Activated T-helper 1 cell treated with anti-CD3 and anti-CD28 coated beads, Interleukin-12 subunit alpha, Interleukin-12 subunit beta, Interleukin-2, Interleukin-4 antibody, amounts not matched to agents 30 ng/mL and 10 ng/mL and 1 ng/mL, durations not matched to agents 14 hours and 24 hours and 36 hours (primary cell): ENCODE measurements at regions of chr1 and their contacts with region 1.

Region 1: DNA sequence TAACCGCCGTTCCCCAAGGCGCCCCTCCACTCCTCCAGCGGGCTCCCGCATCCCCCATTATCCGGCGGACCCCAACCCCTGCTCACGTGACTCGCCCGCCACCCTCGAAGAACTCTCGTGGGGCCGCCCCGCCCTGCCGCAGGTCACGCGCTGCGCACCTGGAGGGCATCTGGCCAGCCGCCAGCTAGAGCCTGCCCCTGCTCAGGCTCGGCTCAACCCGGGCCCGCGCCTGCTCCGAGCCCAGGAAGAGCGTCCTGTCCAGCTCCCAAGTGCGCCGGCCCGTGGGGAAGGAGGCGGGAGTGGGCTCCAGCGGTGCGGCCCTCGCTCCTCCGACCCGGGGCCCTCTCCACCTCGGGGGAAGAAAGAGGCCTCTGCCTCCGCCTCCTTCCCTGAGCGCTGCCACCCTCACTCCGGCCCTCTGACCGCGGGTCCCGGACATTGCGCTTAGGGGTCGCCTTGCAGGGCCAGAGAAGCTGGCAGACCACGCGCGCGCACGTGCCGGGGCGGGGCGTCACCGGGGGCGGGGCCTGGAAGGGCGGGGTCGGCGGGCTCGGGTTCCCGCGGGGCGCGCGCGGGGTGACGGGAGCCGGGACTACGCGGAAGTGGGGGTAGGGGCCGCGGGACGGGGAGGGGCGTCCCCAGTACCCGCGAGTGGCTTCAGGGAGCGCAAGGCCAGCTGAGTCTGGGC is 28.4 kb downstream of the HMGN2 start:
- DNase-seq: peak; percentile 84
- H3K4me3 Mint-ChIP-seq: peak overlapping the region; percentile 90
- H3K27ac Mint-ChIP-seq: peak overlapping the region; percentile 91
- H3K4me1 Mint-ChIP-seq: peaks cover 18% of the 10 kb centered on the region
- H3K27me3 Mint-ChIP-seq: no peaks in the 10 kb centered on the region

Region 2: DNA sequence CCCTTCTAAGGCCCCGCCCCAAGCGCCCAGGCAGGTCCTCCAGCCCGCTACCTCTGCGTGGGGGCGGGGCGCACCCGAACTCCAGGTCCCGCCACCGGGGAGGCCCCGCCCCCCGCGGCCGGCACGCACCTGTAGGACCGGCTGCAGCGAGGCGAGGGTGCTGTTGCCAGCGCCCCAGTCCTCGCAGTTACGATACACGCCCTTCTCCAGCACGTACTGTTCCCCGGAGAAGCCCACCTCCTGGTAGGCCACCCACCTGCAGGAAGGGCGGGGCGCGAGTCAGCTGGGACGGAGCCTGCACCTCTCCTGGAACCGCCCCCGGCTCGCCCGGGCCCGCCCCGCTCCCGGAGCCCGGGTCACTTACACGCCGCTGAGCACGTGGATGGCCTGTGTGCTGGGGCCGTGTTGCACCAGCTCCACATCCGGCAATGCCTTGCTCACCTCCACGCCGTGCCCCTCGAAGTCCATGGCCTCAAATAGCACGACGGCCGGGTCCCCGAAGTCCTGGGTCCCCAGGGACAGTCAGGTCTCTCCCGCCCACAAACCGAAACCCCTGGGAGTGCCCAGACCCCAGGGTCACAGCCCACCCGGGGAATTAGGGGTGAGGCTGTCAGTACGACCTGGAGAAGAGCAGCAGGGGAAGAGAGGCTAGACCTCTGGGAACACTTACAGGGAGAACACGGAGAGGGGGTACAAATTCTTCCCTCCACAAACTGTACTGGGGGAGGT is 164.0 kb before region 1 on chr1:
- intact Hi-C with region 1: no loop called
- DNase-seq: peak; percentile 70
- H3K4me3 Mint-ChIP-seq: peak overlapping the region; percentile 90
- H3K27ac Mint-ChIP-seq: no peak overlapping the region
- H3K4me1 Mint-ChIP-seq: peaks cover 9% of the 10 kb centered on the region
- H3K27me3 Mint-ChIP-seq: peaks cover 27% of the 10 kb centered on the region

Region 3: DNA sequence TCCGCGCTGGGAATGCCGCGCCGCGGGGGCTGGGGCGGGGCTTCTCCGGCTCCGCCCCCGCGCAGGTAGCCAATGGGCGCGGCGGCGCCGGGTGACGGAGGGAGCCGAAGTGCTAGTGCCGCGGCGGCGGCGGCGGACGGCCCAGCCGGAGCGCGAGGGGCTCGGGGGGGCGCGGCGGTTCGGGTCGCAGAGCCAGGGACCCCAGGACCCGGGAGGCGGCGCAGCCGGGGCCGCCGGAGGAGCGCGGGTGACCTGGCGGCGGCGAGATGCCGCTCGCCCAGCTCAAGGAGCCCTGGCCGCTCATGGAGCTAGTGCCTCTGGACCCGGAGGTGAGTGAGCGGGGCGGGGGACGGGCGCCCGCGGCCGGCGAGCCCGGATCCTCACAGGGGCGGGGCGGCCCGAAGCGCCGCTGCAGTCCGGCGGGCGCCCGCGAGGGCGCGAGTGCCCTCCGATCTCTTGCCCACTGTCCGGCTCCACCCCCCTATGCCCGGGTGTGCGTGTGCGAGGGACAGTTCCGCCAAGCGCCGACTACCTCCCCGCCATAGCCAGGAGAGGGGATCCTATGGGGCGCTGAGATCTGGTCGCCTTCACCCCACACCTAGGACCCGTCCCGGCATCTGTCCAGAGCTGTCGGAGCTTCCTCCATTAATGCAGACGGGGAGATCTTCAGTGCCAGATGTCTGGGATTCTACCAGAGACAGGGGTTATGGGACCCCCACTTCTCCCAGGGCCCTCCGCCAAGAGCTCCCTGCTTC is 29.2 kb after region 1 on chr1 and contains the start of gene RPS6KA1:
- intact Hi-C with region 1: loop called (anchors 1 kb)
- DNase-seq: peak; percentile 70
- H3K4me3 Mint-ChIP-seq: peak within 1 kb of the TSS; percentile 94
- H3K27ac Mint-ChIP-seq: peak within 1 kb of the TSS; percentile 93
- H3K4me1 Mint-ChIP-seq: peaks cover 42% of the 10 kb centered on the region
- H3K27me3 Mint-ChIP-seq: peaks cover 2% of the 10 kb centered on the region
- total RNA-seq, gene RPS6KA1: 324 and 331 TPM in 2 replicates

Region 4: GRCh38 chr1:26695356-26696118 is 194.9 kb after region 1 on chr1 and contains the start of gene ARID1A:
- intact Hi-C with region 1: loop called (anchors 2 kb)
- DNase-seq: peak; percentile 96
- H3K4me3 Mint-ChIP-seq: peak within 1 kb of the TSS; percentile 90
- H3K27ac Mint-ChIP-seq: peak within 1 kb of the TSS; percentile 96
- H3K4me1 Mint-ChIP-seq: peaks cover 31% of the 10 kb centered on the region
- H3K27me3 Mint-ChIP-seq: no peaks in the 10 kb centered on the region
- total RNA-seq, gene ARID1A: 130 and 132 TPM in 2 replicates

Region 5: GRCh38 chr1:26874896-26875295 is 374.3 kb after region 1 on chr1:
- intact Hi-C with region 1: loop called (anchors 2 kb)
- DNase-seq: no peak
- H3K4me3 Mint-ChIP-seq: no peak overlapping the region
- H3K27ac Mint-ChIP-seq: no peak overlapping the region
- H3K4me1 Mint-ChIP-seq: no peaks in the 10 kb centered on the region
- H3K27me3 Mint-ChIP-seq: no peaks in the 10 kb centered on the region